Activated CD4-positive, alpha-beta T cell treated with anti-CD3 and anti-CD28 coated beads, Interleukin-2, amount 10 ng/mL, durations not matched to agents 7 days and 5 days (primary cell): ENCODE measurements at regions of chr3 and their contacts with region 1.

Region 1: GRCh38 chr3:155870133-155870944 is at the start of gene GMPS:
- DNase-seq: peak; percentile 94
- H3K4me3 Mint-ChIP-seq: peak within 1 kb of the TSS; percentile 100
- H3K27ac Mint-ChIP-seq: peak within 1 kb of the TSS; percentile 97
- H3K4me1 Mint-ChIP-seq: peaks cover 31% of the 10 kb centered on the region
- H3K27me3 Mint-ChIP-seq: no peaks in the 10 kb centered on the region
- total RNA-seq, gene GMPS: 92.1 to 99.2 TPM

Region 2: DNA sequence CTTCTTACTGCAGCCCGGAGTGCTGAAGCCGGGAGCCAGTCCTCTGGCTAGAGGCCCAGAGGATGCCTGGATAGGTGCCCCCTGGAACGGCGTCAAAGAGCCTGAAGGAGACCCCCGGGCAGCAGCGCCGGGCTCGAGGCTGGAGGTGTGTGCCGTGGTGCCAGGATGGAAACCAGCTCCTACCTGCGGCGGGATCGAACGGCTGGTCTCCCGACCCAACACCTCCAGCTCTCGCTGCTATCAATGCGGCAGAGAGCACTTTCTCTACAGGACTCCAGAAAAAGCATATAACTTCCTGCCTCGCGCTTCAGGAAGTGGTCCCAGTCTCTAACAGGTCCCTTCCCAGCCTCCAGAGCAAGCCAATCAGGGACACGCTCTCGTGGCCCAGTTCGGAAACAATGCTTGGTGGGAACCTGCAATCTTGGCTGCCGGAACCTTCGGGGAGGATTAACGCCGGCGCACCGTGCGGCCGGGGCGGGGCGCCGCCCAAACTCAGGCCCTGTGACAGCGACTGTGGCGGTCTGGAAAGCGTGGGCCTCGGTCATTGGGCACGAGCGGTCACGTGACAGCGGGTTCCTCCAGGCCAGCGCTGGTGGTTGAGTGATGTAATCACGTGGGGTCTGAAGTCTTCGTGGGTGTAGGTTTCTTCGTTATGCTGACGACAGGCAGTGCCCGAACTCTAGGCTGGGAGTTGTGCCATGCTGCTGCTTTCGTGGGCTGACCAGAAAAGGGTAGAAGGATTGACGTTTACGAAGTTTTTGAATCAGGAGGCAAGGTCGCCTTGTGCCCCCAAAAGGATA is 16.0 kb before region 1 on chr3 and contains the start of gene SLC33A1:
- CTCF ChIA-PET with region 1: interaction called, 13 read pairs
- POLR2A ChIA-PET with region 1: interaction called, 6 read pairs
- DNase-seq: peak; percentile 99
- H3K4me3 Mint-ChIP-seq: peak within 1 kb of the TSS; percentile 88
- H3K27ac Mint-ChIP-seq: peak within 1 kb of the TSS; percentile 100
- H3K4me1 Mint-ChIP-seq: peaks cover 39% of the 10 kb centered on the region
- H3K27me3 Mint-ChIP-seq: peaks cover 6% of the 10 kb centered on the region
- total RNA-seq, gene SLC33A1: 26.7 to 27.9 TPM